ENCODE measurements at regions of chr18 and their contacts with region 1.

Region 1: GRCh38 chr18:10015941-10016819 is 102.4 kb downstream of the VAPA start:
- DNase-seq: peak; percentile 39 to 63 (median 45)
- H3K4me3 ChIP-seq: peak overlapping the region in 1 of 3 experiments; percentile 60
- H3K4me3 Mint-ChIP-seq: peak overlapping the region; percentile 56 to 75
- H3K27ac ChIP-seq: peak overlapping the region; percentile 22 to 83
- H3K27ac Mint-ChIP-seq: peak overlapping the region; percentile 91 to 97 (median 95)
- H3K4me1 ChIP-seq: peaks cover 53 to 59% of the 10 kb centered on the region in 2 donors
- H3K4me1 Mint-ChIP-seq: peaks cover 60% of the 10 kb centered on the region
- H3K27me3 ChIP-seq: no peaks in the 10 kb centered on the region
- H3K27me3 Mint-ChIP-seq: peaks cover 0 to 2% (median 0%) of the 10 kb centered on the region in 3 donors
- CTCF ChIP-seq: no peak

Region 2: GRCh38 chr18:9951022-9951859 is 64.9 kb before region 1 on chr18:
- intact Hi-C with region 1: no loop called
- DNase-seq: peak in 2 of 3 donors; percentile 33 to 43
- H3K4me3 ChIP-seq: no peak overlapping the region
- H3K4me3 Mint-ChIP-seq: no peak overlapping the region
- H3K27ac ChIP-seq: no peak overlapping the region
- H3K27ac Mint-ChIP-seq: peak overlapping the region in 5 of 7 donors; percentile 31 to 72 (median 57)
- H3K4me1 ChIP-seq: peaks cover 8 to 12% of the 10 kb centered on the region in 2 donors
- H3K4me1 Mint-ChIP-seq: peaks cover 18% of the 10 kb centered on the region
- H3K27me3 ChIP-seq: no peaks in the 10 kb centered on the region
- H3K27me3 Mint-ChIP-seq: peaks cover 0 to 2% (median under 1%) of the 10 kb centered on the region in 3 donors
- CTCF ChIP-seq: peak; percentile 72

Region 3: GRCh38 chr18:10072671-10073175 is 56.5 kb after region 1 on chr18:
- intact Hi-C with region 1: loop called in 1 of 2 experiments (anchors 10 kb)
- DNase-seq: peak; percentile 72 to 87 (median 87)
- H3K4me3 ChIP-seq: peak overlapping the region in 1 of 3 experiments; percentile 38
- H3K4me3 Mint-ChIP-seq: peak overlapping the region; percentile 17 to 57
- H3K27ac ChIP-seq: peak overlapping the region in 1 of 2 donors; percentile 59
- H3K27ac Mint-ChIP-seq: peak overlapping the region in 5 of 7 donors; percentile 48 to 89 (median 58)
- H3K4me1 ChIP-seq: peaks cover 17 to 41% of the 10 kb centered on the region in 2 donors
- H3K4me1 Mint-ChIP-seq: peaks cover 51% of the 10 kb centered on the region
- H3K27me3 ChIP-seq: no peaks in the 10 kb centered on the region
- H3K27me3 Mint-ChIP-seq: peaks cover 3 to 12% (median 3%) of the 10 kb centered on the region in 3 donors
- CTCF ChIP-seq: no peak

Region 4: DNA sequence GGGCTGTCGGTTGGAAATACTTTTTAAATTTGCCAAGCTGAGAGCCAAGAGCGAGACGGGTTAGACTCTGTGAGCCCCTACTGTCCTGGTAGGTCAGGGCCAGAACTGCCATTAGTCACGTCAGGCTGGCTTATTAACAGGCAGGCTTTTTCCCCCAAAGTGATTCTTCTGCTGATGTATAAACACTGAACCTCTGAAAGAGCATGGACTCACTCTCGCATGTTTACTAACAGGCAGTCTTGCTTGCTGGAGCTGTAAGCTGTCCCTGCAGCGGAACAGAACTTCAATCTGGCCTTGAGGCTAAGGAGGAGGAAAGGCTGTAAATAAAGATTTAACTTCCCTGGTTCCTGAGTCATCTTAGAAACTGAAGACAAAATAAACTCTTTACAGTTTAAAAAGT is 844.7 kb after region 1 on chr18:
- intact Hi-C with region 1: no loop called
- DNase-seq: no peak
- H3K4me3 ChIP-seq: no peak overlapping the region
- H3K4me3 Mint-ChIP-seq: no peak overlapping the region
- H3K27ac ChIP-seq: no peak overlapping the region
- H3K27ac Mint-ChIP-seq: no peak overlapping the region
- H3K4me1 ChIP-seq: no peaks in the 10 kb centered on the region
- H3K4me1 Mint-ChIP-seq: no peaks in the 10 kb centered on the region
- H3K27me3 ChIP-seq: no peaks in the 10 kb centered on the region
- H3K27me3 Mint-ChIP-seq: peaks cover 0 to 2% (median 0%) of the 10 kb centered on the region in 3 donors
- CTCF ChIP-seq: no peak